Naive thymus-derived CD4-positive, alpha-beta T cell (primary cell): ENCODE measurements at regions of chr5 and their contacts with region 1.

Region 1: GRCh38 chr5:75475364-75475763 is 36.1 kb downstream of the CERT1 start:
- DNase-seq: no peak
- ATAC-seq: no peak
- H3K4me3 ChIP-seq: no peak overlapping the region
- H3K4me3 Mint-ChIP-seq: no peak overlapping the region
- H3K27ac ChIP-seq: no peak overlapping the region
- H3K27ac Mint-ChIP-seq: no peak overlapping the region
- H3K4me1 ChIP-seq: no peaks in the 10 kb centered on the region
- H3K4me1 Mint-ChIP-seq: peaks cover 2 to 58% (median 39%) of the 10 kb centered on the region in 7 donors
- H3K27me3 ChIP-seq: no peaks in the 10 kb centered on the region
- H3K27me3 Mint-ChIP-seq: no peaks in the 10 kb centered on the region

Region 2: GRCh38 chr5:74056789-74057164 is 1418.6 kb before region 1 on chr5:
- CTCF ChIA-PET with region 1: no interaction called
- POLR2A ChIA-PET with region 1: no interaction called
- intact Hi-C with region 1: no loop called
- DNase-seq: no peak
- ATAC-seq: no peak
- H3K4me3 ChIP-seq: no peak overlapping the region
- H3K4me3 Mint-ChIP-seq: no peak overlapping the region
- H3K27ac ChIP-seq: no peak overlapping the region
- H3K27ac Mint-ChIP-seq: no peak overlapping the region
- H3K4me1 ChIP-seq: no peaks in the 10 kb centered on the region
- H3K4me1 Mint-ChIP-seq: no peaks in the 10 kb centered on the region
- H3K27me3 ChIP-seq: no peaks in the 10 kb centered on the region
- H3K27me3 Mint-ChIP-seq: peaks cover 5 to 28% (median 19%) of the 10 kb centered on the region in 5 donors

Region 3: DNA sequence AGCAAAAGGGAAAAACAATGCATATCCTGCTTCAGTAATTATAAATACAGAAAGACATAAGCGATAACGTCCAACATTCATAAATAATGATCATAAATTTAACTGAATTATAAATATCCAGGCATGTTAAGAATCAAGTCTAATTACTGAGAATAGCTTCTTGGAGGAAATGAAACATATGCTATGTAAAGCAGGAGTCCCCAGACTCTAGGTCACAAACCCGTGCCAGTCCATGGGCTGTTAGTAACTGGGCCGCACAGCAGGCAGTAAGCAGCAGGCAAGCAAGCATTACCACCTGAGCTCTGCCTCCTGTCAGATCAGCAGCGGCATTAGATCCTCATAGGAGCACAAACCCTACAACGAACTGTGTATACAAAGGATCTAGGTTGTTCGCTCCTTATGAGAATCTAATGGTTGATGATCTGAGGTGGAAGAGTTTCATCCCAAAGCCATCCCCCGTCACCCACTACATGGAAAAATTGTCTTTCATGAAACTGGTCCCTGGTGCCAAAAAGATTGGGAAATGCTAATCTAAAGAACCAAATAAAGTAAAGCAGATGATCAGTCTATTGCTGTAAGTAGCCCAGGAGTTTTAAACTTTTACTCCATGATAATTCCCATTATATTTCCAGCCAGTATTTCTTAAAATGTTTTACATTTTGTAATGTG is 14.3 kb before region 1 on chr5:
- CTCF ChIA-PET with region 1: no interaction called
- POLR2A ChIA-PET with region 1: no interaction called
- intact Hi-C with region 1: loop called in 1 of 2 experiments (anchors 2 kb)
- DNase-seq: no peak
- ATAC-seq: no peak
- H3K4me3 ChIP-seq: no peak overlapping the region
- H3K4me3 Mint-ChIP-seq: no peak overlapping the region
- H3K27ac ChIP-seq: no peak overlapping the region
- H3K27ac Mint-ChIP-seq: peak overlapping the region in 1 of 9 donors; percentile 32
- H3K4me1 ChIP-seq: peaks cover 0 to 12% of the 10 kb centered on the region in 2 donors
- H3K4me1 Mint-ChIP-seq: peaks cover 19 to 52% (median 44%) of the 10 kb centered on the region in 7 donors
- H3K27me3 ChIP-seq: no peaks in the 10 kb centered on the region
- H3K27me3 Mint-ChIP-seq: no peaks in the 10 kb centered on the region

Region 4: DNA sequence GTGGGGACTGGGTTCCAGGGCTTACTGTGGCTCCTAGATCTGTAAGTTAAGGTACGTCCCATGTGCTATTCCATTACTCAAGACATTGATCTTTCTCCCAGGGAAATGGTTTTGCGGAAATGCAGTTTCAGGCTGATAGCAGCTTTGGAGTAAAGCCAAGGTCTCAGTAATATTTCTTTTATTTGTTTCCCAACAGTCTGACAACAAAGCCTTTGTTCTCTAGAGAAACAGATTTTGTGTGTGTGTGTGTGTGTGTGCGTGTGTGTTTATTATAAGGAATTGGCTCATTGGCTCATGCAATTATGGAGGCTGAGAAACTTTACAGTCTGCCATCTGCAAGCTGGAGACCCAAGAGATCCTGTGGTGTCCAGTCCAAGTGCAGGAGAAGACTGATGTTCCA is 254.0 kb after region 1 on chr5:
- CTCF ChIA-PET with region 1: no interaction called
- POLR2A ChIA-PET with region 1: no interaction called
- intact Hi-C with region 1: no loop called
- DNase-seq: no peak
- ATAC-seq: no peak
- H3K4me3 ChIP-seq: no peak overlapping the region
- H3K4me3 Mint-ChIP-seq: no peak overlapping the region
- H3K27ac ChIP-seq: no peak overlapping the region
- H3K27ac Mint-ChIP-seq: no peak overlapping the region
- H3K4me1 ChIP-seq: no peaks in the 10 kb centered on the region
- H3K4me1 Mint-ChIP-seq: no peaks in the 10 kb centered on the region
- H3K27me3 ChIP-seq: no peaks in the 10 kb centered on the region
- H3K27me3 Mint-ChIP-seq: peaks cover 4 to 20% (median 12%) of the 10 kb centered on the region in 5 donors

Region 5: GRCh38 chr5:77218263-77218662 is 1742.9 kb after region 1 on chr5:
- CTCF ChIA-PET with region 1: no interaction called
- POLR2A ChIA-PET with region 1: no interaction called
- intact Hi-C with region 1: no loop called
- DNase-seq: no peak
- ATAC-seq: no peak
- H3K4me3 ChIP-seq: no peak overlapping the region
- H3K4me3 Mint-ChIP-seq: no peak overlapping the region
- H3K27ac ChIP-seq: no peak overlapping the region
- H3K27ac Mint-ChIP-seq: no peak overlapping the region
- H3K4me1 ChIP-seq: no peaks in the 10 kb centered on the region
- H3K4me1 Mint-ChIP-seq: peaks cover 0 to 3% (median 0%) of the 10 kb centered on the region in 7 donors
- H3K27me3 ChIP-seq: peaks cover 0 to 3% of the 10 kb centered on the region in 2 donors
- H3K27me3 Mint-ChIP-seq: peaks cover 37 to 69% (median 52%) of the 10 kb centered on the region in 5 donors